Dendritic cell treated with granulocyte-macrophage colony-stimulating factor and Interleukin-4, amounts not matched to agents 40 ng/mL and 50 ng/mL, for 4 days (primary cell): ENCODE measurements at regions of chr11 and their contacts with region 1.

Region 1: GRCh38 chr11:2380807-2381350 is 3.8 kb downstream of the CD81 start:
- H3K4me3 Mint-ChIP-seq: peak overlapping the region; percentile 71
- H3K27ac Mint-ChIP-seq: peak overlapping the region; percentile 88
- H3K4me1 Mint-ChIP-seq: peaks cover 85% of the 10 kb centered on the region
- H3K27me3 Mint-ChIP-seq: peaks cover 9% of the 10 kb centered on the region

Region 2: DNA sequence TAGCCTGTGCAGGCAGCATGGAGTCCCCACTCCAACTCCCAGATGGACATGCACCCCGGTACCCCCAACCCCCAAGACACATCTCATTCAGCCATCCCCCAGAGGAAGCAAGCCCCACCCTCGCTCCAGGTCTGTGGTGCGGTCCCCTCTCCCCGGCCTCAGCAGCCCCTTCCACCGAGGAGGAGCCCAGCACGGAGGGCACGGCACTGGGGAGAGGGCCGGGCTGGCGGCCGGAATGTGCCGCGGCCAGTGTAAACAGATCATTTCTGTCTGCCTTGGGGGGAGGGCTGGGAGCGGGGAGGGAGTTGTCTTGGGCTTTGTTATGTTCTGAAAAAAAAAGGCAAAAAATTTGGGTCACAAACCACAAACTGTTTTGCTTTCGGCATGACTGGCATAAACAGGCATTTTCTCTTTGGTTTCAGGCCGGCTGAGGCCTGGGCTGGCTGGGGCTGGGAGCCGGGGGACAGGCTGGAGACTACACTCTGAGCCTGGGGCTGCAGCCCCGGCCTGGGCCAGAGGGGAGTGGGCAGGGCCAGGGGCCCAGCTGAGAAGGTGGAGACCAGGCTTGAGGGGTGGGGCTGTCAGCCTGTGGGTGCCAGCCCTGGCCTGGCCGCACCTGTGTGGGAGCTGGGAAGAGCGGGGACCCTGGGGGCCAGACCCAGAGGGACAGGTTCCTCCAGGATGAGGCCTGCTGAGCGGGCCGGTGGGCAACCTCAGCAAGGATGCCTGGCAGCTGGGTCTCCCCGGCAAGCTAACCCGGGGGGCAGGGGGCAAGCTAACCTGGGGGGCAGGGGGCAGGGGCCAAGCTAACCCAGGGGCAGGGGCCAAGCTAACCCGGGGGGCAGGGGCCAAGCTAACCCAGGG is 258.4 kb before region 1 on chr11:
- intact Hi-C with region 1: no loop called
- H3K4me3 Mint-ChIP-seq: no peak overlapping the region
- H3K27ac Mint-ChIP-seq: no peak overlapping the region
- H3K4me1 Mint-ChIP-seq: no peaks in the 10 kb centered on the region
- H3K27me3 Mint-ChIP-seq: peaks cover 35% of the 10 kb centered on the region

Region 3: DNA sequence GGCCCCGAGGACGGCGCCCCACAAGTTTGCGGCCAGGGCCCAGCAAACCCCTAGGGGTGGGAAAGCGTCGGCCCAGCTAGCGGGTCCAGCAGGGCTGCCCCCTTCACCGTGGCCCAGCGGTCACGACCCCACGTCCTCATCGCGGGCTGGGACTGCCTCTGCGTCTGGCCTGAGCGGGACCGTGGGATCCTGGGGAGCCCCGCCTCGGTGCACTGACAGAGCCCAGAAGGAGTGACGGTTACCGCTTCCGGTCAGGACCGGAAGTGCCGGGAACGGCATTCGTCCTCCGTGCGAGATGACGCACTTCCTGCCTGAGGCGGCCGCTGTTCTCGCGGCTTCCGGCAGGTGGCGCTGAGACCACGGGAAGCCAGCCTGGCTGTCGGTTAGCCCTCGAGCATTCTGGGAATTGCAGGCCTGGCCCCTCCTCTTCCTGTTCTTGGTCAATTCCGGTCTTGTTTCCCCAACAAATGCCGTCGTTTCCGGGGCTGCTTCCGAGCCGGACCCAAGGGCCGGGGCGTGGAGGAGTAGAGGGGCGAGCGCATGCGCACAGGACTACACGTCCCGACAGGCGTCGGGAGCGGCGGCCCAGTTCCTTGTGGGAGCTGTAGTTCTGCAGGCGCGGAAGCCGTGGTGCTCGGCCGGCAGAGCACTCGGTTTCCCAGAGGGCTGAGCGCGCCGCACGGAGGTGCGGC is 19.3 kb after region 1 on chr11 and contains the start of gene TSSC4:
- intact Hi-C with region 1: loop called (anchors 2 kb)
- H3K4me3 Mint-ChIP-seq: peak within 1 kb of the TSS; percentile 95
- H3K27ac Mint-ChIP-seq: peak within 1 kb of the TSS; percentile 93
- H3K4me1 Mint-ChIP-seq: peaks cover 33% of the 10 kb centered on the region
- H3K27me3 Mint-ChIP-seq: no peaks in the 10 kb centered on the region

Region 4: GRCh38 chr11:2446955-2447650 is 66.2 kb after region 1 on chr11:
- intact Hi-C with region 1: no loop called
- H3K4me3 Mint-ChIP-seq: peak overlapping the region; percentile 93
- H3K27ac Mint-ChIP-seq: peak overlapping the region; percentile 86
- H3K4me1 Mint-ChIP-seq: peaks cover 56% of the 10 kb centered on the region
- H3K27me3 Mint-ChIP-seq: peaks cover 14% of the 10 kb centered on the region